Calu3 (cell line): ENCODE measurements at regions of chr7 and their contacts with region 1.

Region 1: GRCh38 chr7:23261843-23262452 is 15.4 kb downstream of the GPNMB start:
- DNase-seq: peak; percentile 83
- H3K4me3 Mint-ChIP-seq: no peak overlapping the region
- H3K27ac Mint-ChIP-seq: no peak overlapping the region
- H3K4me1 Mint-ChIP-seq: no peaks in the 10 kb centered on the region
- H3K27me3 Mint-ChIP-seq: peaks cover 31% of the 10 kb centered on the region
- CTCF ChIP-seq: peak; percentile 95

Region 2: DNA sequence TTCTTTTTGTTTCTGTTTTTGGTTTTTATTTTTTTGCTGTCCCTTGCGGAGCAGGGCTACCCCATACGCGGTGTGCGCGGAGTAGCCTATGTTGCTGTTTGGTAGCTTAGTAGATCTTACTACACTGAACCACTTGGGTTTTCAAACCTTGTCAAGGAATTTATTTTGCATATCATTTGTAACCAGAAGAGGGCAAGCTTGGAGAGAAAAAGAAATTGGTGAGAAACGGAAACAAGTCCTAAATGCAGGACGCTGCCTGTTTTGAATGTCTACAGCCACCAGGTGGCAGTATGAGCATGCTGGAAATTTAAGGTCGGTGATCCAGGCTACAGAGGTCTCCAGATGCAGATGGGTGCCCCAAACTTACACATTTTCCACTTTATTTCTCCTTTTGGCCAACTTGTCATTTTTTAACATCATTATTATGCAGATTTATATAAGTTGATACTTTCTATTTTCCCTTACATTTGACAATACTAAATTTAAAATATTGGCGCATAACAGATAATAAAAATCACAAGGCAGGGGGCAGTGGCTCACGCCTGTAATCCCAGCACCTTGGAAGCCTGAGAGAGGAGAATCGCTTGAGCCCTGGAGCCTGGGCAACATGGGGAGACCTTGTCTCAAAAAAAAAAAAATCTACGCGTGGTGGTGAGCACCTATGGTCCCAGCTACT is 285.1 kb after region 1 on chr7:
- CTCF ChIA-PET with region 1: interaction called, 3 read pairs
- intact Hi-C with region 1: loop called (anchors 2 kb)
- DNase-seq: peak; percentile 87
- H3K4me3 Mint-ChIP-seq: no peak overlapping the region
- H3K27ac Mint-ChIP-seq: no peak overlapping the region
- H3K4me1 Mint-ChIP-seq: peaks cover 16% of the 10 kb centered on the region
- H3K27me3 Mint-ChIP-seq: no peaks in the 10 kb centered on the region
- CTCF ChIP-seq: peak; percentile 98